Activated CD4-positive, alpha-beta memory T cell treated with anti-CD3 and anti-CD28 coated beads, Interleukin-2, amount 10 ng/mL, durations not matched to agents 7 days and 5 days (primary cell): ENCODE measurements at regions of chr1 and their contacts with region 1.

Region 1: GRCh38 chr1:25232027-25232865 is at the start of gene SYF2:
- DNase-seq: peak; percentile 90
- H3K4me3 Mint-ChIP-seq: no peak within 1 kb of the TSS
- H3K27ac Mint-ChIP-seq: no peak within 1 kb of the TSS
- H3K4me1 Mint-ChIP-seq: peaks cover 37% of the 10 kb centered on the region
- H3K27me3 Mint-ChIP-seq: no peaks in the 10 kb centered on the region
- total RNA-seq, gene SYF2: 53.4 to 53.5 TPM

Region 2: DNA sequence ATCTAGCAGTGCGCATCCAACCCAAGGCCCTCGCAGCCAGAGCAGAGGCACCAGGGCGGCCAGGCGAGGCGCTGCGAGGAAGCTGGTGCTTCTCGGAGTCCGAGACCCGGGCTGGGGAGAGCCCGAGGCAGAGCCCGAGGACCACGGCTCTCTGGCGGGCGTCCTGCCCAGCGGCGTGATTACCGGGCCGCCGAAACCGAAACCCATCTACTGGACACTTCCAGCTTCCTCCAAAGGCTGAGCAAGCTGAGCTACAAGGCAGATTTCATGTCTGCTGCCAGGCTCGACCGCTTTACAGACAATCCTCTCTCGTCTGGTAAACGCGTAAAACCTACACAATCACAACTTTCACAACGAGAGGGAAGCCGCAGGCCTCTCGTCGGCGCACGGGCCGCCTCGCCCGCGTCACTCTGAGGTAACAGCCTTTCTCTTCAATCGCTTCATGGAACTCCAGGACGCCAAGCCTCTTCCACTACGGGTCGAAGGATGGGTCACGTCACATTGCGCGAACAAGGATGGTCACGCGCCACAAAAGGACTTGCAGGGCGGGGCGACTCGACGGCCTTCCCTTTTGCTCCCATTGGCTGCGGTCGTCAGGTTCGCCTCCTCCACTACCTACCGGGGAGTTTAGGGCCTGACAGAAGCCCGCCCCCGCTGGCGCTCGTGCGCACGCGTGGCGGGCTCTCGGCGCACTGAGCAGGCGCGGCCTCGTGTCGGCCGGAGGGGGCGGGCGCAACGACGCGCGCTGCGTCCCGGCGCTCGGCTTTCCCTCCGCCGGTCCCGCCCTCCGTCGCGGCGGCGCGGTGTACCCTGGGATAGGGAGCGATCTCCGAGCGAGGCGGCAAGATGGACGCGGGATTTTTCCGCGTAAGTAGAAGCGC is 589.5 kb before region 1 on chr1 and contains the start of gene SRRM1:
- CTCF ChIA-PET with region 1: interaction called, 3 read pairs
- POLR2A ChIA-PET with region 1: interaction called, 13 read pairs
- DNase-seq: peak; percentile 99
- H3K4me3 Mint-ChIP-seq: peak within 1 kb of the TSS; percentile 88
- H3K27ac Mint-ChIP-seq: peak within 1 kb of the TSS; percentile 96
- H3K4me1 Mint-ChIP-seq: peaks cover 48% of the 10 kb centered on the region
- H3K27me3 Mint-ChIP-seq: peaks cover under 1% of the 10 kb centered on the region
- total RNA-seq, gene SRRM1: 172 to 183 TPM

Region 3: DNA sequence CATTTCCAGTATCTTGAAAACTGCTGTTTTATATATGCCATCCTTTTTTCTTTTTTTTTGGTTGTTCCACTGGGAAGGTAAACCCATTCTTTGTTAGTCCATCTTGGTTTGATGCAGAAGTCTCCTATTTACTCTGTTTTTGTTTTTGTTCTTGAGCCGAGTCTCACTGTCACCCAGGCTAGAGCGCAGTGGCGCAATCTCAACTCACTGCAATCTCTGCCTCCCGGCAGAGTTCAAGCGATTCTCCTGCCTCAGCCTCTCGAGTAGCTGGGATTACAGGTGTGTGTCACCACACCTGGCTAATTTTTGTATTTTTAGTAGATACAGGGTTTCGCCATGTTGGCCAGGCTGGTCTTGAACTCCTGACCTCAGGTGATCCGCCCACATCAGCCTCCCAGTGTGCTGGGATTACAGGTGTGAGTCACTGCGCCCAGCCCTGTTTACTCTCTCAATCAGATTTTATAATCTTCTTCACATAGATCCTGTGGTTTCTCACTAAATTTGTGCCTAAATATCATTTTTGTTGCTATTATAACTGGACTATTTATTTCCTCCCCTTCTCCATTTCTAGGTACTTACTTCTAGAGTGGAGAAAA is 12.5 kb before region 1 on chr1:
- CTCF ChIA-PET with region 1: no interaction called
- POLR2A ChIA-PET with region 1: interaction called, 11 read pairs
- DNase-seq: no peak
- H3K4me3 Mint-ChIP-seq: no peak overlapping the region
- H3K27ac Mint-ChIP-seq: no peak overlapping the region
- H3K4me1 Mint-ChIP-seq: peaks cover 2% of the 10 kb centered on the region
- H3K27me3 Mint-ChIP-seq: no peaks in the 10 kb centered on the region

Region 4: DNA sequence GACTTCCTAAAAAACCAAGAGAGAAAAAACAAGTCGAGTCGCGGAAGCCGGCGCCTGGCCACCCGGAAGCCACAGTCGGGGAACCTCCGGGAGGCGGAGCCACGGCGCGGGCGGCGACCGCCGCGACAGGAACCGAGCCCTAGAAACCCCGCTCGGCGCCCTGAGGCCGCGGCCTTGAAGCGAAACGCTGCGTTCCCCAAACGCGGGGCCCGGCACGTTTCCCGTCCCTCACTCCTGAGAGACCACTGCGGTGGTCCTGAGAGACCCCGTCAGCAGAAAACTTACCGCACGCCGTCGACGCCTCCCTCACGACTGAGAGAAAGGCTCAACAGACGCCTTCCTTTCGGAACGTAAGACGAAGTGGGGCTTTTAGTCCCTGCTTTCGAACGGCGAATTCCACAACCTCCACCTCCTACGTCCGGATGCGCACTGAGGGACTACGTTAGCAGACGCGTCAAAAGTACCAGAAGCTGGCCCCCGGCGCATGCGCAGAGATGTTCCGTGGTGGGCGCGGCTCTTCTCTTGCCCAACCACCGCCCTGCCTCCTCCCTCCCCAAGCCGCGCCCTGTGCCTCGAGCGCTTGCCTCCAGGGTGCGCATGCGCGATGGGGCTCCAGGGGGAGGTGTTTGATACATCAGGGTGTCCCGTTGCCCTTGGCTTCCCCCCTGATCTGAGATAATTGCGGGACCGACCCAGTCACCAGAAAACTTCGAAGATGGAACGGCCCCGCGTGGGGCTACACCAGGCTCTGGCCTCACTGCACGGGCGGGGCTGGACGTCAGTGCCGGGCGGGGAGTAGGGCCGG is 15.0 kb after region 1 on chr1 and contains the start of gene RSRP1:
- CTCF ChIA-PET with region 1: interaction called, 6 read pairs
- POLR2A ChIA-PET with region 1: interaction called, 157 read pairs
- DNase-seq: peak; percentile 100
- H3K4me3 Mint-ChIP-seq: peak within 1 kb of the TSS; percentile 97
- H3K27ac Mint-ChIP-seq: peak within 1 kb of the TSS; percentile 100
- H3K4me1 Mint-ChIP-seq: peaks cover 55% of the 10 kb centered on the region
- H3K27me3 Mint-ChIP-seq: no peaks in the 10 kb centered on the region
- total RNA-seq, gene RSRP1: 236 to 237 TPM

Region 5: GRCh38 chr1:25338188-25338981 is 106.1 kb after region 1 on chr1 and contains the start of gene TMEM50A:
- CTCF ChIA-PET with region 1: no interaction called
- POLR2A ChIA-PET with region 1: interaction called, 15 read pairs
- DNase-seq: peak; percentile 92
- H3K4me3 Mint-ChIP-seq: peak within 1 kb of the TSS; percentile 90
- H3K27ac Mint-ChIP-seq: peak within 1 kb of the TSS; percentile 90
- H3K4me1 Mint-ChIP-seq: peaks cover 34% of the 10 kb centered on the region
- H3K27me3 Mint-ChIP-seq: no peaks in the 10 kb centered on the region
- total RNA-seq, gene TMEM50A: 182 to 183 TPM

Region 6: DNA sequence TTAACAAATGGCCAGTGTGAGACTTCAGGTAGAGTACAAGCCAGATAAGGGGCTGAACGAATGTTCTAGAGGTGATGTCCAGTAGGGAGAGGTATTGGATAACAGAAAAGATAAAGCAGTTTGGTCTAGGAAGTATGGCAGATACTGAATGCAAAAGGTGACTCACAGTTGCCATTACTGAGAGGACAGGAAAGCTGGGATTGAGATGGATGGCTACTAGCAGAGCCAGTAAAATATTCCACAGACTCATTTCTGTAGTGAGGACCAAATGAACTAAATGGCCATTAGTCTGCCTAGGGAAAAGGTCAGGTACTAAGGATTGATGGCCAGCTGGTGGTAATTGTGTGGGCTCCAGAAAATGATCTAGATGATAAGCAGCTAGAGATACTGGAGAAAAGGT is 209.9 kb after region 1 on chr1:
- CTCF ChIA-PET with region 1: no interaction called
- POLR2A ChIA-PET with region 1: no interaction called
- DNase-seq: no peak
- H3K4me3 Mint-ChIP-seq: no peak overlapping the region
- H3K27ac Mint-ChIP-seq: no peak overlapping the region
- H3K4me1 Mint-ChIP-seq: peaks cover 9% of the 10 kb centered on the region
- H3K27me3 Mint-ChIP-seq: no peaks in the 10 kb centered on the region

Region 7: GRCh38 chr1:25819576-25820246 is 587.5 kb after region 1 on chr1 and contains the start of gene MTFR1L:
- CTCF ChIA-PET with region 1: no interaction called
- POLR2A ChIA-PET with region 1: interaction called, 12 read pairs
- DNase-seq: peak; percentile 95
- H3K4me3 Mint-ChIP-seq: peak within 1 kb of the TSS; percentile 96
- H3K27ac Mint-ChIP-seq: peak within 1 kb of the TSS; percentile 93
- H3K4me1 Mint-ChIP-seq: peaks cover 38% of the 10 kb centered on the region
- H3K27me3 Mint-ChIP-seq: no peaks in the 10 kb centered on the region
- total RNA-seq, gene MTFR1L: 36.6 to 37.7 TPM